Heart right ventricle (tissue), 16 donors: ENCODE measurements at regions of chr4 and their contacts with region 1.

Region 1: GRCh38 chr4:124253080-124253479 is 459.5 kb downstream of the ANKRD50 start:
- DNase-seq: no peak
- ATAC-seq: no peak
- H3K4me3 ChIP-seq: no peak overlapping the region
- H3K27ac ChIP-seq: no peak overlapping the region
- H3K4me1 ChIP-seq: no peaks in the 10 kb centered on the region
- H3K27me3 ChIP-seq: no peaks in the 10 kb centered on the region
- CTCF ChIP-seq: no peak

Region 2: DNA sequence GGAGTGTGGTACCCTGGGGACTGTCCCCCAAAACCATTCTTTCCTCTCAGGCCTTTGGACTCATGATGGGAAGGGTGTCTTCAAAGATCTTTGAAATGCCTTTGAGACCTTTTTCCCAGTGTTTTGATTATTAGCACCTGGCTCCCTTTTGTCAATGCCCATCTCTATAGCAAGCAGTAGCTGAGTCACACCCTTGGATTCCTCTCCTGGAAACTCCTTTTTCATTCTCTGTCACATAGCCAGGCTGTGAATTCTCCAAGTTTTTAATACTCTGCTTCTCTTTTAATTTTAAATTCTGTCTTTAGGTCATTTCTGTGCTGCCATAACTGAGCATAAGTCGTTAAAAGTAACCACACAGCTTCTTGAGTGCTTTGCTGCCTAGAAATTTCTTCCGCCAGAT is 1661.9 kb before region 1 on chr4:
- intact Hi-C with region 1: loop called in 1 of 10 experiments (anchors 10 kb)
- DNase-seq: no peak
- ATAC-seq: no peak
- H3K4me3 ChIP-seq: no peak overlapping the region
- H3K27ac ChIP-seq: no peak overlapping the region
- H3K4me1 ChIP-seq: no peaks in the 10 kb centered on the region
- H3K27me3 ChIP-seq: no peaks in the 10 kb centered on the region
- CTCF ChIP-seq: no peak